Panc1 (cell line): ENCODE measurements at regions of chr5 and their contacts with region 1.

Region 1: DNA sequence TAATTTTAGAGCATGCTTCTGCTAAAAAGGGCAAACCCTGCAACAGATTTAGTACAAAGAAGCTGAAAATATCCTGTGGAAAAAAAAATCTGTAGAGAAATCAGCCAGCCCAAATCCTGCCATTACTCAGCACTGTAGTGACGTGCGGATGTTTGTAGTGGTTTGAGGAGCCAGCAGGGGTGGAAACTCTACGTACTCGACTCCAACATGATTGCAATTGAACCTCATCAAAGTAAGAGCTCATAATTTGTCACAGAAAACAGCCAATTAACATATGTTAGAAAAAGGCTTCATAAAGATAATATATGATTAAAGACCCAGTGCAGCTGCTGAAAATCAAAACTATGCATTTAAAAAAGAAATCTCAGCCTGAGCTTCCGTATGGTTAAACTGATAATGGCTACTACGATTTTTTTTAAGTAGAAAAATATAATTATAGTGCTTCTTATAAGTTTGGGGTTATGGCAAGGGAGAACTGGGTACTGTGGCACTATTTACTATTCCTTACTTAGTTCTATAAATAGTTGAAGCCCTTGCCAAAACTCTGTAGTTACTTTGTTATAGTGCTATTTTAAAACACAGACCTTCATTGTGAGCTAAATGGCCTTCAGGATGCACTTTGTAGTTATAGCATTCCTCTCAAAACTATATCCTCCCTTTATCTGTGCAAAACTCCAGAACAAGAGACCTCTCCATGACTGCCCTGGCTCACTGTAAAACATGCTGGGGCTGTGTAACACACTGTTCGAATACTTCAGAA is 49.4 kb downstream of the MEF2C start:
- DNase-seq: no peak
- ATAC-seq: no peak
- H3K4me3 ChIP-seq: no peak overlapping the region
- H3K27ac ChIP-seq: peak overlapping the region; percentile 41; the same call in 1 of the 2 replicates
- H3K4me1 ChIP-seq: peaks cover 24% of the 10 kb centered on the region; the same call in 1 of the 2 replicates
- H3K27me3 ChIP-seq: no peaks in the 10 kb centered on the region
- CTCF ChIP-seq: no peak

Region 2: DNA sequence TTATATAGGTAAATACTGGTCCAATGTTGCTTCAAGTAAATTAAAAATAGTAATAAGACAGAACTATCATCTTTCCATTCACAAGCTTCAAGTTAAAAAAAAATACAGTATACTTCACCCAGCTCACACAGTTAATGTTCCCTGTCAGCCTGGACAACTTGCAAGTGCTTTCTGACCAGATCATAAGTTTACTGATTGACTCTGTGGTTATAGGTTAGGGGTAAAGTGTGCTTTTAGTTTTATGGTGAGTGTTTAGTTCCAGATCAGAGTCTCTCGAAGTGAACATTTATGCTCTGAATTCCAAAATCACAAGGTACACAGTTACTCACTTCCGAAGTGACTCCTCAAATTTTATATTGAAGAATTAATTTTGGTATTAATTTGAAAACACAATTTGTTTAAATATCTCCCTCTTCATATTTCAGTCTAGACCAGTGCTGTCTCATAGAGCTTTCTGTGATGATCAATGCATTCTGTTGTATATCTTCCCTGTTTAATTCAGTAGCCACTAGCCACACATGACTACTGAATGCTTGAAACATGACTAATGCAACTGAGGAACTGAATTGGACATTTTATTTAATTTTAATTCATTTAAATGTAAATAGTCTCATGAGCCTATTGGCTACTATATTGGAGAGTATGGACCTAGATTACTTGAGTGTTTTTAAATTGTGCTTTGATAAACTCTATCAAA is 41.3 kb before region 1 on chr5:
- CTCF ChIA-PET with region 1: interaction called, 11 read pairs
- POLR2A ChIA-PET with region 1: no interaction called
- in situ Hi-C with region 1: no loop called
- intact Hi-C with region 1: no loop called
- DNase-seq: no peak
- ATAC-seq: no peak
- H3K4me3 ChIP-seq: no peak overlapping the region
- H3K27ac ChIP-seq: no peak overlapping the region
- H3K4me1 ChIP-seq: no peaks in the 10 kb centered on the region
- H3K27me3 ChIP-seq: no peaks in the 10 kb centered on the region
- CTCF ChIP-seq: no peak

Region 3: GRCh38 chr5:88860501-88860900 is 26.9 kb after region 1 on chr5:
- CTCF ChIA-PET with region 1: interaction called, 10 read pairs
- POLR2A ChIA-PET with region 1: no interaction called
- in situ Hi-C with region 1: no loop called
- intact Hi-C with region 1: no loop called
- DNase-seq: no peak
- ATAC-seq: no peak
- H3K4me3 ChIP-seq: no peak overlapping the region
- H3K27ac ChIP-seq: no peak overlapping the region
- H3K4me1 ChIP-seq: no peaks in the 10 kb centered on the region
- H3K27me3 ChIP-seq: no peaks in the 10 kb centered on the region
- CTCF ChIP-seq: no peak

Region 4: DNA sequence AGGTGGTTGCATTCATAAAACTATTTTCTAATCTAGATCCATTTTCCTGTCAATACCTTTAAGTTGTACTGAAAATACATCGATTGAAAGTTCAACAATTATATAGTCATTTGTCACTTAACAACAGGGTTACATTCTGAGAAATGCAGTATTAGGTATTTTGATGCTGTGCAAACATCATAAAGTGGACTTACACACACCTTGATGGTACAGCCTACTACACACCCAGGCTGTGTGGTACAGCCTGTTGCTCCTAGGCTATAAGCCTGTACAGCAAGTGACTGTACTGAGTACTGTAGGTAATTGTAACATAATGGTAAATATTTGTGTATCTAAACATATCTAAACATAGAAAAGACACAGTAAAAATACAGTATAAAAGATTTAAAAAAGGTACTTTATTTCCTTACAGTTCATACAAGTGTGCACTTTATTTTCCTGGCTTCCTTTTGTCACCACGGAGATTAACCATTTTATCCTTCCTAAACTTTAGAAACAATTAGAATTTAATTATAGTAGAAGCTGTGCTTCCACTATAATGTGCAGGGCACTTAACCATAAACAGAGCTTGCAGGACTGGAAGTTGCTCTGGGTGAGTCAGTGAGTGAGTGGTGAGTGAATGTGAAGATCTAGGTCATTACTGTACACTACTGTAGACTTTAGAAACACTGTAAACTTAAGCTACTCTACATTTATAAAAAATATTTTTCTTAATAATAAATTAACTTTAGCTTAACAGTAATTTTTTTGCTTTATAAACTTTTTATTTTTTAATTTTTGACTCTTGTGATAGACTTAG is 92.3 kb after region 1 on chr5:
- CTCF ChIA-PET with region 1: no interaction called
- POLR2A ChIA-PET with region 1: no interaction called
- in situ Hi-C with region 1: no loop called
- intact Hi-C with region 1: no loop called
- DNase-seq: no peak
- ATAC-seq: no peak
- H3K4me3 ChIP-seq: no peak overlapping the region
- H3K27ac ChIP-seq: no peak overlapping the region
- H3K4me1 ChIP-seq: no peaks in the 10 kb centered on the region
- H3K27me3 ChIP-seq: no peaks in the 10 kb centered on the region
- CTCF ChIP-seq: no peak